ENCODE measurements at regions of chr6 and their contacts with region 1.

Region 1: DNA sequence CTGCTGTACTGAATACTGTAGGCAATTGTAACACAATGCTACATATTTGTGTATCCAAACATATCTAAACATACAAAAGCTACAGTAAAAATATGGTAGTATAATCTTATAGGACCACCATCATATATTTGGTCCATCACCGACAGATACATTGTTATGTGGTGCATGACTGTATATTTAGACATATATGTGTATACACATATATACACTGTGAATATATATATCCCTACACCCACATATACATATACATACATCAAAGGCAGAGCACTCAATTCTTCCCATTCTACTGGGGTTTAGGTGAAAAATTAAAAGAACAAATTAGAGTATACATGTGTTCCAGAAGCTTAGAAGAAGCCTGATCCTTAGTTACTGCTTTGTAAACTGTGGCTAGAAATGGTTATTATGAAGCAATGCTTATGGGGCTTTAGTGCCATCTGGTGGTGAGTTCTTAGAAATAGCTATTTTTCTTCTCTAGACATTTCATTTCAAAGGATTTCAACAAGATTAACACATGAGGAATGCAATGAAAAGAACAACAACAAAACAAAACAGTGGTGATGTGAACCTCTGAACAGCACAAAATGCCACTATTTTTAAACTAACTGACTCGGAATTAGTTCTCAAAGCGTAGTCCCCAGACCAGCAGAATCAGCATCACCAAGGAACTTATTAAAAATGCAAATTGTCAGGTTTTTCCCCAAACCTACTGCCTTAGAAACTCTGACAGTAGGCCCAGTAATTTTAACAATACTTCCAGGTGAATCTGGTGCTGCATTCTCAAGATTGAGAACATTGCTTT is 38.0 kb downstream of the PKHD1 start:
- DNase-seq: peak; percentile 36 to 67 (median 57)
- H3K4me3 ChIP-seq: no peak overlapping the region
- H3K27ac ChIP-seq: no peak overlapping the region
- H3K4me1 ChIP-seq: no peaks in the 10 kb centered on the region
- H3K27me3 ChIP-seq: peaks cover 0 to 1% (median 0%) of the 10 kb centered on the region in 5 experiments

Region 2: DNA sequence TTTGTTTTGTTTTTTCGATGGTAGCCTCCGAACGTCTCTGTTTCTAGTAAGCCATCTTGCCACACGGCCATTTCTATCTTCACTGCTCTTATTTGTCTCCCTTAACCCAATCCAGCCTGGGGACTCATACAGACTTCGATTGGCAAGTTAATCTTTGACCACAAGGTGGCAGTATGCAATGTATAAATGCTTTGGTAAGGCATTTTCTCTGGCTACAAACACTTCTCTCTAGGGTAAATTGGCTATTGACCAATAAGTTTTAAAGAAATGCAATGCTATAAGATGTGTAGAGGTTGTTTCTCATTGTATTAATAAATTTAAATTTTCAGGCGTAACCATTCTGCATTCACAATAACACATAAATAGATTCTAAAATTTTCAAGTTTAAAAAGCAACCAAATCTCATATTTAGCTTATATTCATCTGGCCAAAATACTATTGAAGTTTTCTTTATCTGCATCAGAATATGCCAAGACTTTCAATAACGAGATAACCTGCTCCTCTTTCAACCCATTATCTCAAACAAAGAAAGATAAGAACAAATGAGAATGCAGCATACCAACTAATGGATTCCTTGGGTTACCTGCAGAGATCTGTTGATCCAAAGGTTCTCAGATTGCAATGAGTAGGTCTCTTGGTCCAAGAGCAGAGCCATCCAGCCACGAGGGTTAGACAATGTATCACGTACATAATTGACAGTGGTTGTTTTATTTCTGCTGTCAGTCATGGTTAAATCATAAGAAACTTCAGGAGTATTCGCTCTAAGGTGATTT is 194.0 kb before region 1 on chr6:
- CTCF ChIA-PET with region 1: interaction called, 11 read pairs
- POLR2A ChIA-PET with region 1: no interaction called
- DNase-seq: peak; percentile 71 to 85 (median 75)
- H3K4me3 ChIP-seq: no peak overlapping the region
- H3K27ac ChIP-seq: no peak overlapping the region
- H3K4me1 ChIP-seq: no peaks in the 10 kb centered on the region
- H3K27me3 ChIP-seq: peaks cover 0 to 3% (median 0%) of the 10 kb centered on the region in 5 experiments

Region 3: GRCh38 chr6:52059821-52060220 is 10.4 kb after region 1 on chr6:
- CTCF ChIA-PET with region 1: interaction called, 15 read pairs
- POLR2A ChIA-PET with region 1: no interaction called
- DNase-seq: no peak
- H3K4me3 ChIP-seq: no peak overlapping the region
- H3K27ac ChIP-seq: no peak overlapping the region
- H3K4me1 ChIP-seq: peaks cover 0 to 17% (median 7%) of the 10 kb centered on the region in 4 experiments
- H3K27me3 ChIP-seq: no peaks in the 10 kb centered on the region

Region 4: DNA sequence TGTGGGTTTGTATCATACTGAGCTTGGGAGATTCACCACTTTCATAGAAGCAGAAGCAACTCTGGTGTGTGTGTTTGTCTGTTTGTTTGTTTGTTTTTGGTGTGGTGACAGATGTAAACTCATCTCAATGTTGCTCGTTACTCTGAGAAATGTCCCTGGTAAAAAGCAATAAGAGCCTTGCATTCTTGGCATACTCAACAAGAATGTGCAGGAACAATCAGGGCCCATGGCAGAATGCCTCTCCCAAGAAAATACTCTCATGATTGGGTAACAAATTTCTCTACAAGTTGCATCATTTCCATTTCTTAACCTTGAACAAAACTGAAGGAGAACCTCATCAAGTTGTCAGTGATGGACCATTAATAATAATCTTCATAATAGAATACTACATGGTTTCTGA is 81.0 kb after region 1 on chr6:
- CTCF ChIA-PET with region 1: no interaction called
- POLR2A ChIA-PET with region 1: no interaction called
- DNase-seq: no peak
- H3K4me3 ChIP-seq: no peak overlapping the region
- H3K27ac ChIP-seq: no peak overlapping the region
- H3K4me1 ChIP-seq: no peaks in the 10 kb centered on the region
- H3K27me3 ChIP-seq: no peaks in the 10 kb centered on the region

Measured in common myeloid progenitor, CD34-positive (primary cell).